Posterior cingulate gyrus (tissue), 11 donors: ENCODE measurements at regions of chr12 and their contacts with region 1.

Region 1: GRCh38 chr12:71780237-71780822 is 25.7 kb downstream of the RAB21 start:
- DNase-seq: peak in 7 of 10 donors; percentile 22 to 84 (median 52)

Region 2: DNA sequence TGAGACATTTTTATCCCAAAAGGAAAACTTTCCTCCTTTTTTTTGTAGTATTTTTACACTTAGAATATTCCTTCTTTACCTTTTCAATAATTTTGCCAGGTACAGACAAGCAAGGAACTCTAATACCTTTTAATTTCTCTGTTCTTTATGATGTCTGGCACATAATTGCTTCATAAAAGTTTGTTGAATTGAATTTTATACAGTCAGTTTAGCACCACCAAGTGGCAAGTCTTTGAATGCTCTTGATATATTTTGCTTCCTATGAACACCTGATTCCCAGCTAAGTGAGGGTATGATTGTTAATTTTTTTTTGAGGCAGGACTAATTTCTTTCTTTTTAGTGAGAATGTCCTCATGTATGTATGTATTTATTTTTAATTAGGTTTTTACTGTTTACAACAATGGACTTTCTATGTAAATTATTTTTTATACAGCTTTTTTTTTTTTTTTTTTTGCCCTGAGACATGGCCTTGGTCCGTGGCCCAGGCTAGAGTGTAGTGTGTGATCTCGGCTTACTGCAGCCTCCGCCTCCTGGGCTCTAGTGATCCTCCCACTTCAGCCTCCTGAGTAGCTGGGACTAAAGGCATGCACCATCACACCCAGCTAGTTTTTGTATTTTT is 66.1 kb after region 1 on chr12:
- intact Hi-C with region 1: loop called (anchors 5 kb)
- DNase-seq: no peak

Region 3: GRCh38 chr12:71938728-71939385 is 158.5 kb after region 1 on chr12 and contains the start of gene TPH2:
- intact Hi-C with region 1: loop called (anchors 5 kb)
- DNase-seq: peak in 9 of 10 donors; percentile 10 to 86 (median 32)